OCI-LY7 (cell line): ENCODE measurements at regions of chr1 and their contacts with region 1.

Region 1: GRCh38 chr1:56578963-56579875 is at the start of gene PLPP3:
- DNase-seq: peak; percentile 69
- H3K4me3 ChIP-seq: peak within 1 kb of the TSS; percentile 83
- H3K27ac ChIP-seq: peak within 1 kb of the TSS; percentile 22
- H3K4me1 ChIP-seq: peaks cover 49% of the 10 kb centered on the region
- CTCF ChIP-seq: peak; percentile 75
- total RNA-seq, gene PLPP3: 0.92 and 1.4 TPM in 2 replicates

Region 2: GRCh38 chr1:56409094-56409691 is 170.0 kb before region 1 on chr1:
- CTCF ChIA-PET with region 1: no interaction called
- POLR2A ChIA-PET with region 1: interaction called, 7 read pairs
- intact Hi-C with region 1: loop called (anchors 1 kb)
- DNase-seq: peak; percentile 51
- H3K4me3 ChIP-seq: no peak overlapping the region
- H3K27ac ChIP-seq: no peak overlapping the region
- H3K4me1 ChIP-seq: no peaks in the 10 kb centered on the region
- CTCF ChIP-seq: peak; percentile 71

Region 3: GRCh38 chr1:56433056-56433577 is 146.1 kb before region 1 on chr1:
- CTCF ChIA-PET with region 1: interaction called, 7 read pairs
- POLR2A ChIA-PET with region 1: interaction called, 3 read pairs
- intact Hi-C with region 1: loop called (anchors 1 kb)
- DNase-seq: peak; percentile 72
- H3K4me3 ChIP-seq: no peak overlapping the region
- H3K27ac ChIP-seq: peak overlapping the region; percentile 45
- H3K4me1 ChIP-seq: peaks cover 41% of the 10 kb centered on the region
- CTCF ChIP-seq: 0 out of 2 replicates have a peak, but pooled peaks have one; percentile 3

Region 4: DNA sequence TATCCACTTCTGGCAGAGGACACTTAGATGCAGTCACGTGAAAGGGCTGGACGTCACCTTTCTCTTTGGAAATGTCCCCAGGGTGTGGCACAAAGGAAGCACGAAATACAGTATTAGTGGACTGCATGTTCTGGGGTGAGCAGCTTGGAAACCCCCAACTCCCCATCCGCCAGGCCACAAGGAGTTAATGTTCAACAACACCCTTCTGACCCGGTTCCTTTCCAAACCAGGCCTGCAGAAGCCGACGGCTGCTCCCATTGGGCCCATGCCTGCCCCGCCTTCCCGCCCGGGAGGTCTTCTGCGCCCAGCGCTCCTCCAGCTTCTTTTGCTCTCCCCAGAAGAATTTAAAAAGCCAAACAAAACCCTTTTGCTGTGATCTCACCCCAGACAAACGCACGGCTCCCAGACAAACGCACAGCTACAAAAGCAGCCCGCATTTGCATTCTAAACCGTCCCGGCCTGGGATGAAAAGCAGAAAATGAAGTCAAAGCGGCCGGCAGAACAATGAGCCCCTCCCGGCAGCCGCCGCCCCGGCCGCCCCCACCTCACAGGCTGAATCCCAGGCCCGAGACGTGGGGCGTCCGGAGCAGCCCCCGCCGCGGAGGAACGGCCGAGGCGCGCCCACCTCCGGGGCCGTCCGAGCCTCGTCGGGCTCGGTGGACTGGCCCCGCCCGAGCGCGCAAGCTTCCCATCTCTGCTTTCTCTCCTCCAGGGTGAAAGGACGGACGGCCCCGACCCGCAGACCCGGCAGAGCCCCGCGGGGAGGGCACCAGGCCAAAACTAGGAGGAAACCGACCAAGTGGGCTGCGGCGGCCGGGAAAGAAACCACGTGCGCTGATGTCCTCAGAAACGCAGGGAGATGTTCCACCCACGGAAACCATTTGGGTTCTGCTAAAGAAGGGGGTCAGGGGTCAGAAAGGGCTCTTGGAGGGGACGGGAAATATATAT is 101.8 kb before region 1 on chr1:
- CTCF ChIA-PET with region 1: interaction called, 3 read pairs
- POLR2A ChIA-PET with region 1: no interaction called
- intact Hi-C with region 1: loop called (anchors 2 kb)
- DNase-seq: no peak
- H3K4me3 ChIP-seq: no peak overlapping the region
- H3K27ac ChIP-seq: no peak overlapping the region
- H3K4me1 ChIP-seq: peaks cover 9% of the 10 kb centered on the region
- CTCF ChIP-seq: no peak

Region 5: DNA sequence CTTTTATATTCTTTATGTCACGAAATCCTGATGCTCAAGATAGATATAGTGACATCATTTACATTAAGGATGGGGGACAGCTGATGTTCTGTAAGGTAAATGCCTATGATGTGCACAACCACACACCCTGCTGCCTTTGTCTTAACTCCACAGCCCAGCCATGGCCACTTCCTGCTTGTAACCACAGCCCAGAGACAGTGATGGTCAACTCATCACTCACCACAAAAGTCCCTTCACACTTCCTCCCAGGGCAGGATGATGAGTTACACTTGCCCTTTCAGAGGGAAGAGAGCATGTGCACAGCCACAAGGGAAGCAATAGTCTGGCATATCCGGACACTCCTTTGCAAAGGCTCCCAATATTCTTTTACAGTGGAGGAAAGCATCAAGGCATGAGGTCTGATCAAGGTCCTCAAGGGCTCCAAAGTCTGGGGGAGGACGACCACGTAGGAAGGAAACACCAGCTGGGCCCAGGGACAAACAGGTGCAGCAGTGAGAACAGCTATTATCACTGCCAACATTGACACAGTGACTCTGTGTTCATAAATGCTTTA is 53.7 kb before region 1 on chr1:
- CTCF ChIA-PET with region 1: interaction called, 4 read pairs
- POLR2A ChIA-PET with region 1: interaction called, 5 read pairs
- intact Hi-C with region 1: loop called (anchors 1 kb)
- DNase-seq: peak; percentile 81
- H3K4me3 ChIP-seq: peak overlapping the region; percentile 54
- H3K27ac ChIP-seq: peak overlapping the region; percentile 92
- H3K4me1 ChIP-seq: peaks cover 85% of the 10 kb centered on the region
- CTCF ChIP-seq: no peak